CD4-positive, alpha-beta T cell (primary cell): ENCODE measurements at regions of chr15 and their contacts with region 1.

Region 1: GRCh38 chr15:73991726-73992593 is at the start of gene STOML1:
- DNase-seq: peak; percentile 85 to 98 (median 94)
- ATAC-seq: peak; percentile 74
- H3K4me3 ChIP-seq: peak within 1 kb of the TSS; percentile 71
- H3K4me3 Mint-ChIP-seq: peak within 1 kb of the TSS; percentile 82
- H3K27ac ChIP-seq: peak within 1 kb of the TSS in 1 of 2 donors; percentile 47
- H3K27ac Mint-ChIP-seq: peak within 1 kb of the TSS; percentile 85
- H3K4me1 ChIP-seq: peaks cover 48% of the 10 kb centered on the region
- H3K4me1 Mint-ChIP-seq: peaks cover 51% of the 10 kb centered on the region
- H3K27me3 ChIP-seq: no peaks in the 10 kb centered on the region
- H3K27me3 Mint-ChIP-seq: no peaks in the 10 kb centered on the region
- CTCF ChIP-seq: peak; percentile 83
- total RNA-seq, gene STOML1: 4.6 to 5.3 TPM

Region 2: GRCh38 chr15:73972984-73973682 is 18.8 kb before region 1 on chr15:
- CTCF ChIA-PET with region 1: interaction called, 10 read pairs
- POLR2A ChIA-PET with region 1: interaction called, 6 read pairs
- intact Hi-C with region 1: no loop called
- DNase-seq: peak; percentile 64 to 89 (median 71)
- ATAC-seq: peak; percentile 87
- H3K4me3 ChIP-seq: peak overlapping the region; percentile 7
- H3K4me3 Mint-ChIP-seq: no peak overlapping the region
- H3K27ac ChIP-seq: no peak overlapping the region
- H3K27ac Mint-ChIP-seq: no peak overlapping the region
- H3K4me1 ChIP-seq: peaks cover 26% of the 10 kb centered on the region
- H3K4me1 Mint-ChIP-seq: peaks cover 37% of the 10 kb centered on the region
- H3K27me3 ChIP-seq: peaks cover 3 to 6% of the 10 kb centered on the region in 2 experiments
- H3K27me3 Mint-ChIP-seq: peaks cover 23% of the 10 kb centered on the region
- CTCF ChIP-seq: peak; percentile 80

Region 3: DNA sequence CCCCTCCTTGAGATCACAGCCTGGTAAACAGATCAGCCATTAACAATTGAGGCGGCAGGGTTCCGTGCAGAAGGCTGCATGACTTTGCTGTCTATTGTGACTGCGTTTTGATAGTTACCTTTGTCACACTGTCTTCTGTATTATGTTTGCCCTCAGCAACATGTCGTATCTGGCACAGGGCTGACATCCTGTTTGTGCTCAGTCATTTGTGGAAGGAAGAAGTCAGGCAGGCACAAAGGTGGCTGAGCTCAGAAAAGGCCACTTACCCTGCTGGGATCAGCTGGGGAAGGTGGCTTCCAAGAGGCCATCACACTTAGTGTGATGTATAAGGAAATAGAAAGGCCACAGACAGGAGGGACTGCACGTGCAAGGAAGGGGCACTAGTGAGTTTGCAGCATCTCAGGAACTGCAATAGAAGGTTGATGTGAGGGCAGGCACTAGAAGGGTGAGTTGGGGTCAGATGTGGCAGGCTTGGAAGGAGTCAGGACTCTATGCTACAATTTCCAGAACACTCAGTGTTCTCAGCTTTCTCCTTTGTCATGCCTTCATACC is 15.9 kb after region 1 on chr15:
- CTCF ChIA-PET with region 1: interaction called, 3 read pairs
- POLR2A ChIA-PET with region 1: interaction called, 27 read pairs
- intact Hi-C with region 1: no loop called
- DNase-seq: peak in 6 of 14 experiments; percentile 9 to 41 (median 26)
- ATAC-seq: peak; percentile 75
- H3K4me3 ChIP-seq: no peak overlapping the region
- H3K4me3 Mint-ChIP-seq: peak overlapping the region; percentile 21
- H3K27ac ChIP-seq: peak overlapping the region; percentile 37 to 46
- H3K27ac Mint-ChIP-seq: peak overlapping the region; percentile 80
- H3K4me1 ChIP-seq: peaks cover 60% of the 10 kb centered on the region
- H3K4me1 Mint-ChIP-seq: peaks cover 67% of the 10 kb centered on the region
- H3K27me3 ChIP-seq: no peaks in the 10 kb centered on the region
- H3K27me3 Mint-ChIP-seq: no peaks in the 10 kb centered on the region
- CTCF ChIP-seq: no peak

Region 4: GRCh38 chr15:74046275-74046674 is 54.3 kb after region 1 on chr15:
- CTCF ChIA-PET with region 1: interaction called, 3 read pairs
- POLR2A ChIA-PET with region 1: interaction called, 8 read pairs
- intact Hi-C with region 1: loop called in 1 of 2 experiments (anchors 2 kb)
- DNase-seq: no peak
- ATAC-seq: no peak
- H3K4me3 ChIP-seq: no peak overlapping the region
- H3K4me3 Mint-ChIP-seq: no peak overlapping the region
- H3K27ac ChIP-seq: no peak overlapping the region
- H3K27ac Mint-ChIP-seq: no peak overlapping the region
- H3K4me1 ChIP-seq: peaks cover 15% of the 10 kb centered on the region
- H3K4me1 Mint-ChIP-seq: peaks cover 13% of the 10 kb centered on the region
- H3K27me3 ChIP-seq: no peaks in the 10 kb centered on the region
- H3K27me3 Mint-ChIP-seq: no peaks in the 10 kb centered on the region
- CTCF ChIP-seq: no peak

Region 5: GRCh38 chr15:74460871-74461846 is 469.2 kb after region 1 on chr15 and contains the start of gene UBL7:
- CTCF ChIA-PET with region 1: no interaction called
- POLR2A ChIA-PET with region 1: no interaction called
- intact Hi-C with region 1: loop called in 1 of 2 experiments (anchors 5 kb)
- DNase-seq: peak; percentile 91 to 97 (median 96)
- ATAC-seq: peak; percentile 98
- H3K4me3 ChIP-seq: peak within 1 kb of the TSS; percentile 92
- H3K4me3 Mint-ChIP-seq: peak within 1 kb of the TSS; percentile 97
- H3K27ac ChIP-seq: peak within 1 kb of the TSS; percentile 61 to 62
- H3K27ac Mint-ChIP-seq: peak within 1 kb of the TSS; percentile 84
- H3K4me1 ChIP-seq: peaks cover 19% of the 10 kb centered on the region
- H3K4me1 Mint-ChIP-seq: peaks cover 53% of the 10 kb centered on the region
- H3K27me3 ChIP-seq: no peaks in the 10 kb centered on the region
- H3K27me3 Mint-ChIP-seq: no peaks in the 10 kb centered on the region
- CTCF ChIP-seq: peak; percentile 15
- total RNA-seq, gene UBL7: 14.3 to 17.1 TPM

Region 6: DNA sequence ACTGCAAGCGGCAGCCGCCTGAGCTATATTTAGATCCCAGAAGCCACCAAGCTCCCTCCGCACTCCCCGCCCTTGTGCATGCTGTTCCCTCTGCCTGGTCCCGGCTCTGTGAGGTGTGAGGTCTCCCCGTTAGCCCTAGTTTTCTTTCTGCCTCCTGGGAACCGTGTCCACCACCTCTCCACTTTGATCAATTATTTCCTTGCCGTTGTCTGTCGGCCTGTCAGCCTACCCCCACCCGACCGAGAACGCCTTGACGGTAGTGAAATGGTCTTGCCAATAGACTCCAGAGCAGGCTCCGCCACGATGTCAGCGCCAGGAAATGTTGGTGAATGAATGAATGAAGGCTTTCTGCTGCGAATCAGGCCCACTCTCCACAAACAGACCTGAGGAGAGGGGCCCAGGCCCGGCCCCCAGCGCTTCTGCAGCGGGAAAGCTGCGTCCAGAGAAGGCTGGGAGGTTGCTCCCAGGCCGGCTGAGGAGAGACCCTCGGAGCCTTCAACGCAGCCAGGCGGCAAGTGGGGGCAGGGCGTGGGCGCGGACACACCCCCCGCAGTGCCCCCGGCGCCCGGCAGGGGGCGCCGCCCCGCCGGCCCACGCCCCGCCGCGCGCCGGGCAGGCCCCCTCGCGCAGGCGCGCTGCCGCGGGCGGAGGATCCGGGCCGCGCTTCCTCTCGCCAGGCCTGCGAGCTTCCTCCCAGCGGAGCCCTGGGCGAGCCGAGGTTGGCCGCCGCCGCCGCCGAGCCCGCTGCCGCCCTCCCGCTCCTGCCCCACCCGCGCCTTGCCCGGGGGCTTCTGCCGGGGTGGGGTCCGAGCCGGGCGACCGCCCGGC is 789.7 kb after region 1 on chr15 and contains the start of gene CSK:
- CTCF ChIA-PET with region 1: no interaction called
- POLR2A ChIA-PET with region 1: no interaction called
- intact Hi-C with region 1: loop called in 1 of 2 experiments (anchors 10 kb)
- DNase-seq: peak; percentile 59 to 94 (median 80)
- ATAC-seq: peak; percentile 59
- H3K4me3 ChIP-seq: peak within 1 kb of the TSS; percentile 100
- H3K4me3 Mint-ChIP-seq: peak within 1 kb of the TSS; percentile 90
- H3K27ac ChIP-seq: peak within 1 kb of the TSS; percentile 84 to 93
- H3K27ac Mint-ChIP-seq: peak within 1 kb of the TSS; percentile 94
- H3K4me1 ChIP-seq: peaks cover 88% of the 10 kb centered on the region
- H3K4me1 Mint-ChIP-seq: peaks cover 65% of the 10 kb centered on the region
- H3K27me3 ChIP-seq: no peaks in the 10 kb centered on the region
- H3K27me3 Mint-ChIP-seq: no peaks in the 10 kb centered on the region
- CTCF ChIP-seq: peak; percentile 59
- total RNA-seq, gene CSK: 114 to 118 TPM

Region 7: DNA sequence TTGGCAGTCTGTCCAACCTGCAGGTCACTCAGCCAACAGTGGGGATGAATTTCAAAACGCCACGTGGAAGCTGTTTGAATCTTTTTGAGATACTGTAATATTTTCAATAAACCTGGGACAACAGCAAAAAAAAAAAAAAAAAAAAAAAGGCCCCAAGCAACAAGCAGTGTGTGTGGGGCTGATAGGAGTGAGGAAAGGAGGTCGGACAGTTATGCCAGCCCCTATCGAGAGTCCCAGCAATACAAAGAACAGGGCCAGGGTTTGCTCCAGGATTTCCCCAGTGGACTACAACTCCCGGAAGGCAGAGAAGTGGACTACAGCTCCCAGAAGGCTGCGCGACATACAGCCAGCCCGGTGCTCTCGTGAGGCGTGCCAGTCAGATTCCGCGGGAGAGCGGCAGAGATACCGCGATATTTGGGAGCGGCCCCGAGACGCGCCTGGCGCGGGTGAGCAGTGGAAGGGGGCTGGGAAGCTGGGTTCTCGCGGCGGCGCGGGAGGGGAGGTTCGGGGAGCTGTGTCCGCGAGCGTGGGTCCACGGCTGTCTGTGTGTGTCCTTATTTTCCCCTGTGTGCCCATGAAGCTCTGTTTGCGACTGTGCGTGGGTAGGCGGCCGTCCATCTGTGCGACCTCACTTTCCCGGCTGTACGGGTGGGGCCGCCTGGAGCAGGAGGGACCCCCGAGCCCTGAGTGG is 1031.4 kb after region 1 on chr15 and contains the start of gene PPCDC:
- CTCF ChIA-PET with region 1: no interaction called
- POLR2A ChIA-PET with region 1: no interaction called
- intact Hi-C with region 1: loop called in 1 of 2 experiments (anchors 5 kb)
- DNase-seq: peak; percentile 83 to 96 (median 90)
- ATAC-seq: peak; percentile 100
- H3K4me3 ChIP-seq: peak within 1 kb of the TSS; percentile 81
- H3K4me3 Mint-ChIP-seq: peak within 1 kb of the TSS; percentile 99
- H3K27ac ChIP-seq: peak within 1 kb of the TSS; percentile 46 to 50
- H3K27ac Mint-ChIP-seq: peak within 1 kb of the TSS; percentile 94
- H3K4me1 ChIP-seq: peaks cover 20% of the 10 kb centered on the region
- H3K4me1 Mint-ChIP-seq: peaks cover 23% of the 10 kb centered on the region
- H3K27me3 ChIP-seq: no peaks in the 10 kb centered on the region
- H3K27me3 Mint-ChIP-seq: no peaks in the 10 kb centered on the region
- CTCF ChIP-seq: no peak
- total RNA-seq, gene PPCDC: 5.5 to 5.8 TPM